Mammary epithelial cell (primary cell): ENCODE measurements at regions of chr15 and their contacts with region 1.

Region 1: GRCh38 chr15:75684642-75685041 is 28.0 kb downstream of the CSPG4 start:
- DNase-seq: no peak
- H3K4me3 ChIP-seq: no peak overlapping the region
- H3K27ac ChIP-seq: no peak overlapping the region
- H3K4me1 ChIP-seq: no peaks in the 10 kb centered on the region
- H3K27me3 ChIP-seq: no peaks in the 10 kb centered on the region
- CTCF ChIP-seq: no peak

Region 2: GRCh38 chr15:75367913-75368688 is 316.5 kb before region 1 on chr15 and contains the start of gene MAN2C1:
- CTCF ChIA-PET with region 1: interaction called, 4 read pairs
- dilution Hi-C with region 1: no loop called
- in situ Hi-C with region 1: no loop called
- intact Hi-C with region 1: loop called (anchors 1 kb)
- DNase-seq: peak; percentile 96
- H3K4me3 ChIP-seq: peak within 1 kb of the TSS; percentile 64 to 79 (median 76)
- H3K27ac ChIP-seq: peak within 1 kb of the TSS; percentile 83
- H3K4me1 ChIP-seq: peaks cover 42% of the 10 kb centered on the region
- H3K27me3 ChIP-seq: no peaks in the 10 kb centered on the region
- CTCF ChIP-seq: peak; percentile 70 to 85
- total RNA-seq, gene MAN2C1: 78.2 to 156 TPM

Region 3: GRCh38 chr15:75508840-75509532 is 175.7 kb before region 1 on chr15:
- CTCF ChIA-PET with region 1: no interaction called
- dilution Hi-C with region 1: no loop called
- in situ Hi-C with region 1: no loop called
- intact Hi-C with region 1: loop called (anchors 2 kb)
- DNase-seq: peak; percentile 13
- H3K4me3 ChIP-seq: no peak overlapping the region
- H3K27ac ChIP-seq: no peak overlapping the region
- H3K4me1 ChIP-seq: no peaks in the 10 kb centered on the region
- H3K27me3 ChIP-seq: no peaks in the 10 kb centered on the region
- CTCF ChIP-seq: peak; percentile 32 to 56

Region 4: DNA sequence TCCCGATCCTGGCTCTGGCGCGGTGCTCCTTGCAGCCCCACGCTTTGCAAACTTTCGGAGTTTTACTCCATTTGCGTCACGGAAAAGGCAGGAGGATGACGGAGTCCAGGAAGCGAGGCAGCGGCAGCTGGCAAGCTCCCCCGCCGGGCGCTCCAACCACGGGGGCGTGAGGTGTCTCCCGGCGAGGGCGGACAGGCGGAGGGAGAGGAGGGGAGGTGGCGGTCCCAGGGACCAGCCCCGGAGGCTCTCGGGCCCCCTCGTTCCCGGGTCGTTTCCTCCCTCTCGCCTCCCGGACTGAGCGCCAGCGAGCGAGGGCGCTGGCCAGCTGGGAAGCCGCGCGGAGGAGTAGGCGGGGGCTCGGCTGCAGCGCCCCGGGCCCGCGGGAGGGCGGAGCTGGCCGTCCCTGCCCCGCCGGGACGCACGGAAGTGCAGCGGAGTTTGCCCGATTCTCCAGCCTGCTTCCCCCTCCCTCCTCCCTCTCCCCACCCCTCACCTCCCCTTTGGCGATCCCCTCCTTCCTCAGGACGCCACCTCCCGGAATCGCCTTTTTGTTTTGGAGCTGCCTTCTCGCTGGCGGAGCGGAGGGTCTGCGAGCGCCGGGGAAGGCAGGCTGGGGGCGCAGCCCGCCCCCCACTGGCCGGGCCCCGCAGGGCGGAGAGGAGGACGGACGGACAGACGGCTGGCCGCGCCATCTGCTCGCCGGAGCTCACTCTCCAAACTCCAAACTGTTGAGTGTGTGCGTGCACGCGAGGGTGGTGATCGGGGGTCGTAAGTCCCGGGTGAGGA is 37.1 kb before region 1 on chr15 and contains the start of gene SNX33:
- CTCF ChIA-PET with region 1: interaction called, 13 read pairs
- dilution Hi-C with region 1: loop called (anchors 5 kb)
- in situ Hi-C with region 1: no loop called
- intact Hi-C with region 1: loop called (anchors 1 kb)
- DNase-seq: peak; percentile 84
- H3K4me3 ChIP-seq: peak within 1 kb of the TSS; percentile 71 to 90 (median 82)
- H3K27ac ChIP-seq: peak within 1 kb of the TSS; percentile 82
- H3K4me1 ChIP-seq: peaks cover 49% of the 10 kb centered on the region
- H3K27me3 ChIP-seq: no peaks in the 10 kb centered on the region
- CTCF ChIP-seq: peak; percentile 12 to 58
- total RNA-seq, gene SNX33: 28.2 to 41.4 TPM

Region 5: DNA sequence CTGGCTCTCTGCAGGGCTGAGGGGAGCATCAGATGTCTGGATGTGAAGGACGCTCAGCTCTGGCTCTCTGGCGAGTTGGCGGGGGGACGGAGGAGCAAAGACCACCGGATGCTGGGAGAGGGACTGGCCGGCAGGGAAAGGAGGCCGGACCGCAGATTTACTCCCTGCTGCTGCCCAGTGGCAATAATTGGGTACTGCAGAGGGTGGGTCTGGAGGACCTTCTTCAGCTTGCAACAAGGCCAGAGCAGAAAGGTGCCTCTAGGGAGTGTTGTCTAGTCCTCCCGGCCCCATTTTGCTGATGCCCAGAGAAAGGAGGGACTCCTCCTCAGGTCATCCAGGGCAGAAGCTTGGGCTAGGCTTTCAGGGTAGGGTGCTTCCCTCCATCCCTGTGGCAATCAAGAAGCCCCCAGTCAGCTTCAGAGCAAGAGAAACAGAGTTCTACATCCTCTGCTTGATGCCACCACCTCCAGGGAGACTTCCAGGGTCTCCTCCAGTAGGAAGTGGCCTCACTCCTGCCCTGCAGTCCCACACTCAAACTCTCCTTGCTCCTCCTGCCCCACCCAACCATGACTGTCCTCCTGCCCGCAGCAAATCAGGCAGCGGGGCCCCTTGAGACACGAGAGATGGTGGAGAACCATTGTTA is 48.3 kb after region 1 on chr15:
- CTCF ChIA-PET with region 1: no interaction called
- dilution Hi-C with region 1: no loop called
- in situ Hi-C with region 1: no loop called
- intact Hi-C with region 1: loop called (anchors 2 kb)
- DNase-seq: peak; percentile 44
- H3K4me3 ChIP-seq: no peak overlapping the region
- H3K27ac ChIP-seq: no peak overlapping the region
- H3K4me1 ChIP-seq: no peaks in the 10 kb centered on the region
- H3K27me3 ChIP-seq: no peaks in the 10 kb centered on the region
- CTCF ChIP-seq: peak; percentile 76 to 81